BJ (cell line): ENCODE measurements at regions of chr4 and their contacts with region 1.

Region 1: GRCh38 chr4:24877868-24878637 is 34.8 kb downstream of the CCDC149 start:
- DNase-seq: no peak
- H3K4me3 ChIP-seq: no peak overlapping the region
- H3K27me3 ChIP-seq: no peaks in the 10 kb centered on the region
- CTCF ChIP-seq: no peak

Region 2: GRCh38 chr4:24775032-24775605 is 102.9 kb before region 1 on chr4:
- CTCF ChIA-PET with region 1: no interaction called
- POLR2A ChIA-PET with region 1: interaction called, 20 read pairs
- DNase-seq: no peak
- H3K4me3 ChIP-seq: no peak overlapping the region
- H3K27me3 ChIP-seq: no peaks in the 10 kb centered on the region
- CTCF ChIP-seq: no peak

Region 3: DNA sequence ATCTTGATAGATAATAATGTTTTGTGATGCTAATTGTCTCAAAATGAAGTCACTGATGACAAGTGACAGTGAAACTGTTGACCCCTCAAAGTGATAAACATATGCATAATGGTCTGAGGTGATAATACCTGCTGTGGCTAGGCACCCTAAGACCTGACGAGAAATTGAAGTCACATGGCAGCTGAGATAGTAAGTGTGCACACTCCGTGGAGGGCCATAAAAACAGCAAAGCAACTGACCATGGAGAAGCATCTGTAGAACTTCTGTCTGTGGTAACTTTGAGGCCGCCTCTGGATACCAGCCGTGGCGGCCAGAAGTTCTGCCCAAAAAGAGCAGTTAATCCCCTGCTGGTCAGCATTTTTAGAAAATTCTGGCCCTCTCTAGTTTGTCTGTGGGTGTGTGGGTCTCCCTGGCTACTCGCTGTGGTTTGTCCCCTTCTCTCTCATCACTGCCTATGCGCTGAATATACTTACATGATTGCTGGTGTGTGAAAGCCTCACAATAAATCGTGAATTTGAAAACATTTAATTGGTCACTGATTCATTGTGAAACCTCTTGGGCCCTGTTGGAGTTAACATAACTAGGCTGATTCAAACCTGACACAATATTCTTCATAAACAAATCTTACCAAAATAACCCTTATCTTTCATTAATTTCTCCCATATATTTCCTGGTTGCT is 15.8 kb before region 1 on chr4:
- CTCF ChIA-PET with region 1: no interaction called
- POLR2A ChIA-PET with region 1: interaction called, 15 read pairs
- DNase-seq: no peak
- H3K4me3 ChIP-seq: no peak overlapping the region
- H3K27me3 ChIP-seq: no peaks in the 10 kb centered on the region
- CTCF ChIP-seq: no peak

Region 4: DNA sequence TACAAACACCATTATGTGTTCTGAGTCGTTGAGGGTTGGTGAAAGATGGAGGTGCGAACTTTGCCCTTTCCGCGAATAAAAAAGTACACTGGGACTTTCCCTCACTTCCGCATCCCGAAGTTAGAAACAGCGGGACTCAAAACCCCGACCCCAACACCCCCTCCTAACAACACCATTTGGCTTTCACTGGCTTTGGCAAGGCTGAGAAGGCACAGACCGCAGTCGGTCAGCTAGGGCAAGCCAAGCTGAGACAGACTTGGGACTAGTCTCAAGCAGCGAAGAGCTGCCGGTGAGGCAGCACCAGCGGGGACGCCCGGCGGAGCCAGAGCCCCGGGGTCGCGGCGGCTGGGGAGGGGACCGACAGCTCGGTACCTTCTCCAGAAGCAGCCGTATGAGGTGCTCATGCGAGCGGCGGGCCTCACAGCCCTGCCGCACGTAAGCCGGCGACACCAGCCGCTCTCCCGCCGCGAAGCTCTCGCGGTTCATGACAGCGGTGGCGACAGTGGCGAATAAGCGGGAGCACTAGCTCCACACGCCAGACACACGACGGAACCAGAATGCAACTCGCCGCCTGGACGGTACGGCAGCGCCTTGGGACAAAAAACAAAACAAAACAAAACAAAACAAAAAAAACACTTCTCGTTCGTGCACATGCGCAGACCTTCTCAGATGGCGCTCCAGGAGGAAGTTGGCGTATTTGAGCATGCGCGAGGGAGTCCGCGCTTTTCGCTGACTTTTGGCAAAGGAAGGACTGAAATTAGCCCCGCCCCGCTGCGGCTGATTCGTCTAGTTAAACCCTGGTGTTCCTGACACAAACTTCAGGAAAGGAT is 282.0 kb after region 1 on chr4 and contains the start of gene SEPSECS:
- CTCF ChIA-PET with region 1: no interaction called
- POLR2A ChIA-PET with region 1: no interaction called
- DNase-seq: peak; percentile 92
- H3K4me3 ChIP-seq: peak within 1 kb of the TSS; percentile 77
- H3K27me3 ChIP-seq: no peaks in the 10 kb centered on the region
- CTCF ChIP-seq: no peak
- polyA plus RNA-seq, gene SEPSECS: 2.6 and 4.9 TPM in 2 replicates